Panc1 (cell line): ENCODE measurements at regions of chr5 and their contacts with region 1.

Region 1: DNA sequence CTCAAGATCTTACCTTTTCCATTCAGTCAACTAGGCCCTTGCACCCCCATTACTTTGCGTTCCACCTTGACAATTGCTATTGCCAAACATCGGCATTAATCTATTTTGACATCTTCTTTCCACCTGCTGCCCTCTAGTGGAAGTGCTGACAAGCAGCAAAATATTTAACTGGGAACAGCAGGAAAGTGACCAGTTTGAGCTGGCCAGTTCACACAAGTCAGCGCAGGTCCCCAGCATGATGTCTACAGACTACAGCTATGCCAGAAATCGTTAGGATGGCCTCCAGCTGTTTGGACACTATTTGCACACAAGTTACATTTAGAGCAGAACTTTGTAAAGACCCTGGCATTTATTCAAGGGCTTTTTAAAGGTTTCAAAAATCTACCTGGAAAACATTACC is 160.1 kb downstream of the GHR start:
- DNase-seq: peak; percentile 35
- ATAC-seq: peak; percentile 63
- H3K4me3 ChIP-seq: no peak overlapping the region
- H3K27ac ChIP-seq: no peak overlapping the region
- H3K4me1 ChIP-seq: no peaks in the 10 kb centered on the region
- H3K27me3 ChIP-seq: no peaks in the 10 kb centered on the region; the same call in 1 of the 2 replicates
- CTCF ChIP-seq: peak; percentile 86

Region 2: DNA sequence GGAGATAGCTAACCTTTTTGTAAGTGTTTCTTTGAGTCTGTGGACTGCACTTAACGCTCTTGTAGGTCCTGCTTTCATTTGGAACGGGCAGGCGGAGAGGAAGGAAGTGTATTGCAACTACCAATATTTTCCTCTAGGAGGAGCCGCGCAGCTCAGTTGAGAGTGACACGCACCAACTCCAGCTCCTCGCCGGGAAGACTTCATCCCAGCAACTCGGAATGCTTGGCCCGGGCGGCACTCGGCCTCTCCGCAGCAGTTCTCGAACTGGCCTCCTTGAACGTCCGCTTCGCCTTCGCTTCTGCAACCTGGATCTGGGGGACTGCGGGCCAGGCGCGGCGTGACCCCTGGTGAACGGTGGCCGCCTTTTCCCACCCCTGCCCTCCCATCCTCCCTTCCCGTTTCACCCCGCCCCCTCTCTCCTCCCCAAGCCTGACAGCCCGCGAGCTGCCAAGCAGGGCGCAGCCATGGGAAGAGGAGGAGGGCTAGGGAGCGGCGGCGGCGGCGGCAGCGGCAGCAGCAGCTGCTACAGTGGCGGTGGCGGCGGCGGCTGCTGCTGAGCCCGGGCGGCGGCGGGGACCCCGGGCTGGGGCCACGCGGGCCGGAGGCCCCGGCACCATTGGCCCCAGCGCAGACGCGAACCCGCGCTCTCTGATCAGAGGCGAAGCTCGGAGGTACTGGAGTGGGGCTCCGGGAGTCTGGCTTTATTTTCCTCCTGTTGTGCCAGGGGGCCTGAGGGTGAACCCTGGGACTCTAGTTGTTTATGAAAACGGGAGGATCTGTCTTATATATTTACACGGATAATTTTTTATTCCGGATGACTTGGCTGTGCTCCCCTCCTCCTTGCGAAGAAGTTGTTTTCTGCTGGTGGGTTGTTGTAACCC is 159.8 kb before region 1 on chr5 and contains the start of gene GHR:
- CTCF ChIA-PET with region 1: interaction called, 3 read pairs
- POLR2A ChIA-PET with region 1: no interaction called
- in situ Hi-C with region 1: no loop called
- intact Hi-C with region 1: loop called (anchors 2 kb)
- DNase-seq: peak; percentile 58
- ATAC-seq: peak; percentile 97
- H3K4me3 ChIP-seq: peak within 1 kb of the TSS; percentile 38 to 50
- H3K27ac ChIP-seq: no peak within 1 kb of the TSS
- H3K4me1 ChIP-seq: peaks cover 7% of the 10 kb centered on the region
- H3K27me3 ChIP-seq: peaks cover 7% of the 10 kb centered on the region
- CTCF ChIP-seq: peak; percentile 85
- total RNA-seq, gene GHR: 0.05 TPM

Region 3: GRCh38 chr5:42621242-42621641 is 37.9 kb after region 1 on chr5:
- CTCF ChIA-PET with region 1: no interaction called
- POLR2A ChIA-PET with region 1: no interaction called
- in situ Hi-C with region 1: no loop called
- intact Hi-C with region 1: no loop called
- DNase-seq: no peak
- ATAC-seq: no peak
- H3K4me3 ChIP-seq: no peak overlapping the region
- H3K27ac ChIP-seq: no peak overlapping the region
- H3K4me1 ChIP-seq: no peaks in the 10 kb centered on the region
- H3K27me3 ChIP-seq: no peaks in the 10 kb centered on the region
- CTCF ChIP-seq: no peak

Region 4: GRCh38 chr5:42767491-42768105 is 184.3 kb after region 1 on chr5:
- CTCF ChIA-PET with region 1: no interaction called
- POLR2A ChIA-PET with region 1: no interaction called
- in situ Hi-C with region 1: no loop called
- intact Hi-C with region 1: loop called (anchors 10 kb)
- DNase-seq: peak; percentile 18
- ATAC-seq: 0 out of 2 replicates have a peak, but pooled peaks have one; percentile 58
- H3K4me3 ChIP-seq: no peak overlapping the region
- H3K27ac ChIP-seq: no peak overlapping the region
- H3K4me1 ChIP-seq: no peaks in the 10 kb centered on the region
- H3K27me3 ChIP-seq: peaks cover 5% of the 10 kb centered on the region
- CTCF ChIP-seq: peak; percentile 63; the same call in 1 of the 2 replicates